Activated CD8-positive, alpha-beta T cell treated with anti-CD3 and anti-CD28 coated beads, Interleukin-2, amount 10 ng/mL, durations not matched to agents 7 days and 5 days (primary cell): ENCODE measurements at regions of chr9 and their contacts with region 1.

Region 1: GRCh38 chr9:133184962-133185361 is 21.2 kb upstream of the GBGT1 start:
- DNase-seq: peak; percentile 69
- ATAC-seq: peak; percentile 56
- H3K4me3 Mint-ChIP-seq: peak overlapping the region; percentile 38
- H3K27ac Mint-ChIP-seq: no peak overlapping the region
- H3K4me1 Mint-ChIP-seq: peaks cover 17% of the 10 kb centered on the region
- H3K27me3 Mint-ChIP-seq: peaks cover 41% of the 10 kb centered on the region

Region 2: DNA sequence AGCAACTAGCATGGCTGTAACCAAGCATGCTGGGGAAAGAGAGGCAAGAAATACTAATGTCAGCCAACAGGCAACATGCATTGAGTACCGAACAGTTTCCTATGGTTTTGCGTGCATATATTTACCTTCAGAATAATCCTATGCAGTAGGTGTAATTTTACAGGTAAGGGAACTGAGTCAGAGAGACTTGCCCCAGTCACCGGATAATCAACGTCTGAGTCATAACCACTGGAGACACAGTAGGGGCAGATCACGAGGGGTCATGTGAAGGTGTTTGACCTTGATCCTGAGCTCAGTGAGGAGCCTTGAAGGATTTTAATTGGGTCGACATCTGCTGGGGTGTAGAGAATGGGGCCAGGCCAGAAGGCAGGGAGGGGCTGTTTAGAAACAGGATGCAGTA is 227.2 kb before region 1 on chr9:
- CTCF ChIA-PET with region 1: no interaction called
- POLR2A ChIA-PET with region 1: no interaction called
- DNase-seq: no peak
- ATAC-seq: no peak
- H3K4me3 Mint-ChIP-seq: no peak overlapping the region
- H3K27ac Mint-ChIP-seq: no peak overlapping the region
- H3K4me1 Mint-ChIP-seq: no peaks in the 10 kb centered on the region
- H3K27me3 Mint-ChIP-seq: peaks cover 2% of the 10 kb centered on the region

Region 3: DNA sequence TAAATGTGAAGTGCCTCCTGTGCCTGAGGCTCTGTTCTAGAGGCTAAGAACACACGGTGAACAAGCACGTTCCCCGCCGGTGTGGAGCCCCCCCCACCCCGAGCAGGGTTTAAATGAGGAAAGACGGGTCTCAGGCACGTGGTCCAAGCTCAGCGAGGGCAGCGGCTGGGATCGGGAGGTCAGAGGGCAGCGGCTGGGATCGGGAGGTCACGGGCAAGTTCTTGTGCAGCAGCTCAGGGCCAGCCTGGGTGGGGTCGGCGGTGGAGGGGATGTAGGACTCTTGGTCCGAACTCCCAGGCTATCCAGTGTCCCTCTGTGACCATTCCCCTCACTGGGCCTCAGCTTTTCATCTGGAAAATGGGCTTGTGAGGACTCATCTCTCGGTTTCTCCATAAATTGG is 18.6 kb before region 1 on chr9:
- CTCF ChIA-PET with region 1: interaction called, 10 read pairs
- POLR2A ChIA-PET with region 1: no interaction called
- DNase-seq: no peak
- ATAC-seq: no peak
- H3K4me3 Mint-ChIP-seq: no peak overlapping the region
- H3K27ac Mint-ChIP-seq: no peak overlapping the region
- H3K4me1 Mint-ChIP-seq: peaks cover 6% of the 10 kb centered on the region
- H3K27me3 Mint-ChIP-seq: peaks cover 8% of the 10 kb centered on the region

Region 4: DNA sequence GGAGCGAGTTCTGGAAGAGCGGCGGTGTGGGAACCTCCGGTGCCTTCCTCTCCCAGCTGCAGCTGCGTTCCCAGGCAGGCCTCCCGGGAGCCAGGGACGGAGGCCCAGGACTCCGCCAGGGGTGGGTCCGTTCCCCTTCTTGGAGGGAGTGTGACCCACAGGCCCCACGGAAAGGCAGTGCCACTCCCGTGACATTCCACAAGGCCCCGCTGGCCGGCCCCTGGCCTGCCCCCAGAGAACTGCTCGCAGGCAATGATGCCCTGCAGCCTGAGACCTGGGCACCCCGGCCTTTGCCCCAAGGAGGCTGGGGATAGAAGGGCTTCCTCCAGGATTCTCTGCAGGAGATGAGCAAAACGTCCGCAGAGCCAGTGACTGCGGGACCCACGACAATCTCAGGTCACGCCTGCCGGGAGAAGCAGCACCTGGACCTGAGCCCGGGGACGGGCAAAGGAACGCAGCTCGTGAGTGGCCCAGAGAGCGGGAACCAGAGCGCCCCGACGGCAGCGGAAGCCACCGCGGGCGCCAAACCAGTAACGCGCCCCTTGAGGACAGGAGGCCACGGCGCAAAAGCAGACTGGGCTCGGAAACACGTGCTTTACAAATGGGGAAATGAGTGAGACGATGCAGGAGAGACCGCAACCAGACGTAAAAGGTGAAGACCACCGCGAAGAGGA is 14.8 kb after region 1 on chr9:
- CTCF ChIA-PET with region 1: interaction called, 12 read pairs
- POLR2A ChIA-PET with region 1: no interaction called
- DNase-seq: peak; percentile 59
- ATAC-seq: peak; percentile 81
- H3K4me3 Mint-ChIP-seq: peak overlapping the region; percentile 61
- H3K27ac Mint-ChIP-seq: peak overlapping the region; percentile 44
- H3K4me1 Mint-ChIP-seq: peaks cover 7% of the 10 kb centered on the region
- H3K27me3 Mint-ChIP-seq: peaks cover 11% of the 10 kb centered on the region

Region 5: GRCh38 chr9:133335878-133336811 is 151.2 kb after region 1 on chr9 and contains the start of gene SURF6:
- CTCF ChIA-PET with region 1: interaction called, 35 read pairs
- POLR2A ChIA-PET with region 1: no interaction called
- DNase-seq: peak; percentile 94
- ATAC-seq: peak; percentile 91
- H3K4me3 Mint-ChIP-seq: peak within 1 kb of the TSS; percentile 97
- H3K27ac Mint-ChIP-seq: peak within 1 kb of the TSS; percentile 96
- H3K4me1 Mint-ChIP-seq: peaks cover 61% of the 10 kb centered on the region
- H3K27me3 Mint-ChIP-seq: no peaks in the 10 kb centered on the region
- total RNA-seq, gene SURF6: 20.1 to 21.4 TPM

Region 6: DNA sequence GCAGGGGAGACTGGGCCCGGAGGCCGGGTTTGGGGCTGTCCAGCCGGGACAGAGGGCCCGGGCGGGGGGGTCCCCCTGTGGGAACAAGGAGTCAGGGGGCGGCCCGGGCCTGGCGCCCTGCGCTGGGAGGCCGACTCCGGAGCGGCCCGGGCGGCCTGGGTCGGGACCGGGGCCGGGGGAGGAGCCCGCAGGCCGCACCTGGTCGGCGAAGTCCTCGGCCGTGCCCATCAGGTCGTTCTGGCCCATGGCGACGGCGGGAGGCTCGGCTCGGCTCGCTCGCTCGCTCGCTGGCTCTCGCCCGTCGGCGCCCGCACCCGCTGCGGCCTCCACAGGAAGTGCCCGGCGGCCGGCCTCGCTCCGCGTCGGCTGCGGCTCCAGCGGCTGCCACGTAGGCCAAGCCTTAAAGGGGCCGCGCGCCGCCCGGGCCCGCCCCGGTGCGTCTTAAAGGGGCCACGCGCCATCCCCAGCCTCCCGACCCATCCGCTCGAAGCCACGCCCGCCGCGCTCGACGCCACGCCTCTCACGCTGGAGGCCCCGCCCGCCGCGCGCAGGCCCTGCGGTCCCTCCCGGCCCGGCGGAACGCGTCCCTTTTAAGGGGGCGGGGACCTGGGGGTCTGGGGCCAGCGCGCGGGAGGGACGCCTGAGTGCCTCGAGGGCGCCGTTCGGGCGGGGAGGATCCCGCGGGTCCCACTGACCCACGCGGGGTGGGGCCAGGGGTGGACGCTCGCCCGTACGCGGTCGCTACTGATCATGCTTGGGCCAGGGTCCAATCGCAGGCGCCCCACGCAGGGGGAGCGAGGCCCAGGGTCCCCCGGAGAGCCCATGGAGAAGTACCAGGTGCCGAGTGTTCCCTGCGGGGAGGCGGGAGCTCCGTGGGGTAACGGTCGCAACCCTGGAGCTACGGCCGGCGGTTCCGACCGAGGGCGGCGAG is 191.0 kb after region 1 on chr9 and contains the starts of genes STKLD1 and SURF4:
- CTCF ChIA-PET with region 1: interaction called, 13 read pairs
- POLR2A ChIA-PET with region 1: interaction called, 3 read pairs
- DNase-seq: peak; percentile 96
- ATAC-seq: peak; percentile 85
- H3K4me3 Mint-ChIP-seq: peak within 1 kb of the TSS; percentile 99
- H3K27ac Mint-ChIP-seq: peak within 1 kb of the TSS; percentile 99
- H3K4me1 Mint-ChIP-seq: peaks cover 48% of the 10 kb centered on the region
- H3K27me3 Mint-ChIP-seq: peaks cover 3% of the 10 kb centered on the region
- total RNA-seq, gene STKLD1: 0.71 to 0.76 TPM
- total RNA-seq, gene SURF4: 175 to 176 TPM